T-cell (primary cell): ENCODE measurements at regions of chr22 and their contacts with region 1.

Region 1: GRCh38 chr22:40950962-40951794 is at the start of gene RBX1:
- DNase-seq: peak; percentile 97 to 100 (median 99)
- ATAC-seq: peak; percentile 82 to 90 (median 84)
- H3K4me3 ChIP-seq: peak within 1 kb of the TSS; percentile 89 to 94
- H3K4me3 Mint-ChIP-seq: peak within 1 kb of the TSS; percentile 90 to 99 (median 98)
- H3K27ac ChIP-seq: peak within 1 kb of the TSS; percentile 100
- H3K27ac Mint-ChIP-seq: peak within 1 kb of the TSS; percentile 100
- H3K4me1 ChIP-seq: peaks cover 10 to 30% of the 10 kb centered on the region in 2 experiments
- H3K4me1 Mint-ChIP-seq: peaks cover 36 to 40% (median 38%) of the 10 kb centered on the region in 3 donors
- H3K27me3 ChIP-seq: no peaks in the 10 kb centered on the region
- H3K27me3 Mint-ChIP-seq: no peaks in the 10 kb centered on the region
- total RNA-seq, gene RBX1: 27.1 to 46.1 (median 39.7) TPM

Region 2: DNA sequence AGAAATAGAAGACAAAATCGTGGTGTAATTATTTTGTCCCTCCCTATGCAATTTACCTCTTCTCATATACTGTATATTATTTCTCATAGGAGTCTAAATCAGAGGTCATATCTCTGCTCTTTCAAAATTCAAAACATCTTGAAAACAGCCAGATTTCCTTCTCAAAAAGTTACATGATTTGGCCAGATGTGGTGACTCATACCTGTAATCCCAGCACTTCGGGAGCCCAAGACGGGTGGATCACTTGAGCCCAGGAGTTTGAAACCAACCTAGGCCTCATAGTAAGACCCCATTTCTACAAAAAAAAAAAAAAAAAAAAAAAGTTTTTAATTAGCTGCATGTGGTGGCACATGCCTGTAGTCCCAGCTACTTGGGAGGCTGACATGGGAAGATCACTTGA is 60.3 kb before region 1 on chr22:
- CTCF ChIA-PET with region 1: no interaction called
- POLR2A ChIA-PET with region 1: interaction called in 1 of 2 experiments, 11 read pairs
- DNase-seq: no peak
- ATAC-seq: no peak
- H3K4me3 ChIP-seq: no peak overlapping the region
- H3K4me3 Mint-ChIP-seq: no peak overlapping the region
- H3K27ac ChIP-seq: no peak overlapping the region
- H3K27ac Mint-ChIP-seq: no peak overlapping the region
- H3K4me1 ChIP-seq: no peaks in the 10 kb centered on the region
- H3K4me1 Mint-ChIP-seq: no peaks in the 10 kb centered on the region
- H3K27me3 ChIP-seq: no peaks in the 10 kb centered on the region
- H3K27me3 Mint-ChIP-seq: no peaks in the 10 kb centered on the region

Region 3: GRCh38 chr22:40922484-40923303 is 28.5 kb before region 1 on chr22:
- CTCF ChIA-PET with region 1: interaction called in 1 of 2 experiments, 25 read pairs
- POLR2A ChIA-PET with region 1: interaction called, 3 to 9 read pairs
- DNase-seq: peak in 11 of 35 experiments; percentile 0 to 85 (median 14)
- ATAC-seq: peak; percentile 75 to 89 (median 82)
- H3K4me3 ChIP-seq: no peak overlapping the region
- H3K4me3 Mint-ChIP-seq: peak overlapping the region in 2 of 3 donors; percentile 22 to 24
- H3K27ac ChIP-seq: no peak overlapping the region
- H3K27ac Mint-ChIP-seq: peak overlapping the region; percentile 0 to 1
- H3K4me1 ChIP-seq: peaks cover 2 to 3% of the 10 kb centered on the region in 2 experiments
- H3K4me1 Mint-ChIP-seq: peaks cover 4% of the 10 kb centered on the region in 3 donors
- H3K27me3 ChIP-seq: no peaks in the 10 kb centered on the region
- H3K27me3 Mint-ChIP-seq: no peaks in the 10 kb centered on the region

Region 4: DNA sequence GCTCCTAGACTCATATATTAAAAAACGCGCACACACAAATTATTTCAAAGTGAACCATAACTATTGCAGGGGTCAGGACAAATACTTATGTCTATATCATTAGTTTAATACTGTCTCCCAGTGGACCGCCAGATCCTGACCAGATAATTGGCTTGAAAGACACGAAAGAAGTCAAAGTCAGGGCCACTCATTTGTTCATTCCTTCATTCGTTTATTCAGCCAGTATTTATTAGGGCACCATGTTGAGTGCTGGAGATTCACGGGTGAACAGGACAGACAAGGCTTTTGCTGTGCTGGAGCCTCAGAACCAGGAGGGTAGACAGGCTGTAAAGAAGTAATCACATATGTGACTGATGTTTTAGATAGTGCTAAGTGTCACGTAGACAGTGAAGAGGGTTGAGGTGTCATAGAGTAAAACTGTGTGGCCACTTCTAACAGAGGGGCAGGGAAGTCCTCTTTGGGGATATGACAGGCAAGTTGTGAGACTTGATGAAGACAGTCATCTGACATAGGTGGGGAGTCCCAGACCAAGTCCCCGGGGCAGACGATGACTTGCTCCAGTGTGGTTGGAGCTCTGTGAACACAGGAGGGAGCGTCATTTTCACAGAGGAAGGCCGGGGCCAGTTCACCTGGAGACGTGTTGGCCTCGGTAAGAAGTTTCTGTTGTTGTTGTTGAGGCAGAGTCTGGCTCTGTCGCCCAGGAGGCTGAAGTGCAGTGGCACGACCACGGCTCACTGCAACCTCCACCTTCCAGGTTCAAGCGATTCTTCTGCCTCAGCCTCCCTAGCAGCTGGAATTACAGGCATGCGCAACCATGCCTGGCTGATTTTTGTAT is 25.9 kb after region 1 on chr22:
- CTCF ChIA-PET with region 1: no interaction called
- POLR2A ChIA-PET with region 1: interaction called, 4 to 12 read pairs
- DNase-seq: no peak
- ATAC-seq: no peak
- H3K4me3 ChIP-seq: no peak overlapping the region
- H3K4me3 Mint-ChIP-seq: no peak overlapping the region
- H3K27ac ChIP-seq: no peak overlapping the region
- H3K27ac Mint-ChIP-seq: no peak overlapping the region
- H3K4me1 ChIP-seq: no peaks in the 10 kb centered on the region
- H3K4me1 Mint-ChIP-seq: no peaks in the 10 kb centered on the region
- H3K27me3 ChIP-seq: no peaks in the 10 kb centered on the region
- H3K27me3 Mint-ChIP-seq: no peaks in the 10 kb centered on the region

Region 5: DNA sequence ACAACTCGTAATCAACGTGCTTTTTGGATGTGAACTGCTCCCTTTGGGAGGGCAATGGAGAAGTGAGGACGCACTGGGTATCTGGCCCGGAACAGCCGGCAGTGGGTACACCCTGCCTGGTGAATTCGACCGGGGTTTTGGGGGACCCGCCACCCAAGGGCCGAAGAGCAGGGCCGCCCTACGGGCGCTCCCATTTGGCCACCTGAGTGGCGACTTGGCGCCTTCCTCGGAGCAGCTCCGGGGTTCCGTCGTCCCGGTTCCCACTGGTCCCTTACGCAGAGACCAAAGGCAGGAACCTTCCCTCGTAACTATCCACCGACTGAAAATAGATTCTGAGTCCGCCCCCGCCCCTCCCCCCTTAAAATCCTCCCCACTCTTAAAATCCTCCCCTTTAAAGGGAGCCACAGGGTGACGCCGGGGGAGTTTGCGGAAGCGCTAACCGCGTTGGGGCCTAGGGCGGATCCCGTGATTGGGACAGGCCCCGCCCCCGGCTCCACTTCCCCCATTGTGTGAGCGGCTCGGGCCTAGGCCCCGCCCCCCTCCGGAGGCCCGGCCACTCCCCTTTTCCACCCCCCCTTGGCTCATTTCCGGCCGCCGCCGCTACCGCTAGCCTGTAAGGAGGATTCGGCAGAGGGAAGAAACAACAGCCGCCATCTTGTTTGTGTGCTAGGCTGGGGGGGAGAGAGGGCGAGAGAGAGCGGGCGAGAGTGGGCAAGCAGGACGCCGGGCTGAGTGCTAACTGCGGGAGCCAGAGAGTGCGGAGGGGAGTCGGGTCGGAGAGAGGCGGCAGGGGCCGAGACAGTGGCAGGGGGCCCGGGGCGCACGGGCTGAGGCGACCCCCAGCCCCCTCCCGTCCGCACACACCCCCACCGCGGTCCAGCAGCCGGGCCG is 140.2 kb after region 1 on chr22:
- CTCF ChIA-PET with region 1: interaction called, 3 to 4 read pairs
- POLR2A ChIA-PET with region 1: interaction called in 1 of 2 experiments, 21 read pairs
- DNase-seq: peak; percentile 98 to 100 (median 99)
- ATAC-seq: peak; percentile 84 to 90 (median 87)
- H3K4me3 ChIP-seq: peak overlapping the region; percentile 63 to 96
- H3K4me3 Mint-ChIP-seq: peak overlapping the region; percentile 98 to 99 (median 99)
- H3K27ac ChIP-seq: peak overlapping the region; percentile 96
- H3K27ac Mint-ChIP-seq: peak overlapping the region; percentile 99 to 100
- H3K4me1 ChIP-seq: peaks cover 17% of the 10 kb centered on the region in 2 experiments
- H3K4me1 Mint-ChIP-seq: peaks cover 31 to 36% (median 31%) of the 10 kb centered on the region in 3 donors
- H3K27me3 ChIP-seq: no peaks in the 10 kb centered on the region
- H3K27me3 Mint-ChIP-seq: no peaks in the 10 kb centered on the region

Region 6: GRCh38 chr22:41123151-41123550 is 172.0 kb after region 1 on chr22:
- CTCF ChIA-PET with region 1: interaction called, 7 to 12 read pairs
- POLR2A ChIA-PET with region 1: interaction called in 1 of 2 experiments, 7 read pairs
- DNase-seq: no peak
- ATAC-seq: no peak
- H3K4me3 ChIP-seq: no peak overlapping the region
- H3K4me3 Mint-ChIP-seq: no peak overlapping the region
- H3K27ac ChIP-seq: no peak overlapping the region
- H3K27ac Mint-ChIP-seq: peak overlapping the region; percentile 45 to 60
- H3K4me1 ChIP-seq: peaks cover 0 to 7% of the 10 kb centered on the region in 2 experiments
- H3K4me1 Mint-ChIP-seq: peaks cover 34 to 41% (median 41%) of the 10 kb centered on the region in 3 donors
- H3K27me3 ChIP-seq: no peaks in the 10 kb centered on the region
- H3K27me3 Mint-ChIP-seq: no peaks in the 10 kb centered on the region

Region 7: GRCh38 chr22:42520663-42521546 is 1569.7 kb after region 1 on chr22:
- CTCF ChIA-PET with region 1: no interaction called
- POLR2A ChIA-PET with region 1: interaction called in 1 of 2 experiments, 17 read pairs
- DNase-seq: no peak
- ATAC-seq: no peak
- H3K4me3 ChIP-seq: no peak overlapping the region
- H3K4me3 Mint-ChIP-seq: peak overlapping the region; percentile 80 to 92 (median 87)
- H3K27ac ChIP-seq: no peak overlapping the region
- H3K27ac Mint-ChIP-seq: peak overlapping the region; percentile 55 to 74
- H3K4me1 ChIP-seq: peaks cover 3 to 25% of the 10 kb centered on the region in 2 experiments
- H3K4me1 Mint-ChIP-seq: peaks cover 8 to 25% (median 8%) of the 10 kb centered on the region in 3 donors
- H3K27me3 ChIP-seq: no peaks in the 10 kb centered on the region
- H3K27me3 Mint-ChIP-seq: no peaks in the 10 kb centered on the region